Endothelial cell of umbilical vein (primary cell): ENCODE measurements at regions of chr20 and their contacts with region 1.

Region 1: DNA sequence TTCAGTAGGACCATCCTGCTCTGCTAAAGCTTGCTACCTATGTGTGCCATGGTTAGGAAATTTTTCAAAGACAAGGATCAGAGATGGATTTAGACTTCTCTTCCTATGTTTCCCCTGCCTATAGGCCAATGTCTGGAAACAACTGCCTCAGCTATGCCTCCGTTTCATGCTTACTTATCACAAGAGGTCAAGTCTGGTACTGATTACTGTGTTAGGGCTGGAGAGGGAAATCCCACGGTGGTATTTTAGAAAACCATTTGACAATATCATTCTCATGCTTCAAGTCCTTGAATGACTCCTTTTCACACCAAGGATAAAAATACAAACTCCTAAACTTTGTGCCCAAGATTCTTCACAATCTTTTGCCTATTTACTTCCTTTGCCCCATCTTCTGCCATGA is 484.3 kb downstream of the DHX35 start:
- DNase-seq: no peak
- H3K4me3 ChIP-seq: no peak overlapping the region
- H3K27ac ChIP-seq: no peak overlapping the region
- H3K4me1 ChIP-seq: no peaks in the 10 kb centered on the region
- H3K27me3 ChIP-seq: no peaks in the 10 kb centered on the region
- CTCF ChIP-seq: no peak
- POLR2A ChIP-seq: no peak

Region 2: GRCh38 chr20:37833221-37833896 is 1613.0 kb before region 1 on chr20:
- CTCF ChIA-PET with region 1: no interaction called
- POLR2A ChIA-PET with region 1: no interaction called
- dilution Hi-C with region 1: no loop called
- intact Hi-C with region 1: loop called (anchors 10 kb)
- DNase-seq: no peak
- H3K4me3 ChIP-seq: no peak overlapping the region
- H3K27ac ChIP-seq: no peak overlapping the region
- H3K4me1 ChIP-seq: no peaks in the 10 kb centered on the region
- H3K27me3 ChIP-seq: no peaks in the 10 kb centered on the region
- CTCF ChIP-seq: no peak
- POLR2A ChIP-seq: no peak

Region 3: GRCh38 chr20:39691151-39691862 is 244.9 kb after region 1 on chr20:
- CTCF ChIA-PET with region 1: no interaction called
- POLR2A ChIA-PET with region 1: no interaction called
- dilution Hi-C with region 1: no loop called
- intact Hi-C with region 1: no loop called
- DNase-seq: no peak
- H3K4me3 ChIP-seq: no peak overlapping the region
- H3K27ac ChIP-seq: no peak overlapping the region
- H3K4me1 ChIP-seq: no peaks in the 10 kb centered on the region
- H3K27me3 ChIP-seq: no peaks in the 10 kb centered on the region
- CTCF ChIP-seq: no peak
- POLR2A ChIP-seq: no peak